GM10248 (cell line): ENCODE measurements at regions of chr10 and their contacts with region 1.

Region 1: GRCh38 chr10:133388973-133389818 is 4.8 kb upstream of the MTG1 start:
- DNase-seq: peak; percentile 87
- CTCF ChIP-seq: peak; percentile 6

Region 2: GRCh38 chr10:133378251-133379096 is 10.7 kb before region 1 on chr10:
- CTCF ChIA-PET with region 1: interaction called, 12 read pairs
- POLR2A ChIA-PET with region 1: interaction called, 3 read pairs
- DNase-seq: peak; percentile 70
- CTCF ChIP-seq: no peak